Activated naive CD4-positive, alpha-beta T cell treated with anti-CD3 and anti-CD28 coated beads for 36 hours (primary cell): ENCODE measurements at regions of chr6 and their contacts with region 1.

Region 1: DNA sequence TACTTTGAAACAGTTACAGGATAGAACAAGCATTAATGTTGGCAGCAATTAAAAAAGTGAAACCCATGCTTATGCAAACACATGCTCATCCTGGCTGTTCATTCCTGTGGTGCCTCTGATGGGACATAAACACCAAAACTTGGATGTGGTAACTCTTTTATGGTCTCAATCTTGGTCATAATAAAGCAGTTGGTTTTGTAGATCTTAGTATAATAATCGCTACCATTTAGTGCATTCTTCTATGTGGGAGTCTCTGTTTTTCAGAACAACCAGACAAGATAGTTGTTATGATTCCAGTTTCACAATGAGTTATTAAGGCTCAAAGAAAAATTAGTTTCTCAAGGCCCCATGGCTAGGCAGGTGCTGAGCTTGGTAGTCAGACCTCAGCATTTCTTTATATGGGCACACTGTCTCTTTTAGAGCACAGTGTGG is 184.0 kb downstream of the UTRN start:
- DNase-seq: peak; percentile 43
- H3K4me3 Mint-ChIP-seq: peak overlapping the region; percentile 42
- H3K27ac Mint-ChIP-seq: peak overlapping the region; percentile 46
- H3K4me1 Mint-ChIP-seq: peaks cover 20% of the 10 kb centered on the region
- H3K27me3 Mint-ChIP-seq: no peaks in the 10 kb centered on the region

Region 2: DNA sequence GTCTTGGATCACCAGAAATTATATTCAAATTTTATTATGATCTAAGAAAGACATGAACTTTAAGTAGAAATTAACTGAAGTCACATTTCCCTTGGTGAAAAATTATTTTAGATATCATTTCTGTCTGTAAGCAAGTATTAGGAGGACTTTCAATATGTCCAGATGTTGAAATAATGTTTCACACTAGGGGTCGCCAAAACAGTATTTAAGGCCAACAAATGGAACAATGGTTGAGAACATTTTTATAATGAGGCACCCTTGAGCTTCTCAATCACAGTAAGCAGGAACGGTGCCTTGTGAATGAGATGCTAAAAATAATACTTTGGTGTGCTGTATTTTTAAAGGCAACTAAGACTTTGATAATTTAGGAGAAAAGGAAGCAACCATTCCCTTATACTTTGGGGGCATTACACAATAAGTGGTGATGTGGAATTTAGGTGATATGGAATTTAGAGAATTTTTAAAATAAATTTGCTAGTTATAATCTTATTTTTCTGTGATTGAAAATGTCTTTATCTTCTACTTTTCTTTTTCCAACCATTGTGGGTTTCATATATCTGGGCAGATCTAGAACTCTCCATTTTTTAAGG is 364.2 kb before region 1 on chr6:
- CTCF ChIA-PET with region 1: interaction called, 4 read pairs
- intact Hi-C with region 1: loop called (anchors 5 kb)
- DNase-seq: peak; percentile 48
- H3K4me3 Mint-ChIP-seq: no peak overlapping the region
- H3K27ac Mint-ChIP-seq: no peak overlapping the region
- H3K4me1 Mint-ChIP-seq: peaks cover 11% of the 10 kb centered on the region
- H3K27me3 Mint-ChIP-seq: no peaks in the 10 kb centered on the region

Region 3: GRCh38 chr6:144248476-144249301 is 220.5 kb before region 1 on chr6:
- CTCF ChIA-PET with region 1: no interaction called
- intact Hi-C with region 1: loop called (anchors 5 kb)
- DNase-seq: peak; percentile 9
- H3K4me3 Mint-ChIP-seq: no peak overlapping the region
- H3K27ac Mint-ChIP-seq: peak overlapping the region; percentile 32
- H3K4me1 Mint-ChIP-seq: peaks cover 16% of the 10 kb centered on the region
- H3K27me3 Mint-ChIP-seq: peaks cover 4% of the 10 kb centered on the region

Region 4: DNA sequence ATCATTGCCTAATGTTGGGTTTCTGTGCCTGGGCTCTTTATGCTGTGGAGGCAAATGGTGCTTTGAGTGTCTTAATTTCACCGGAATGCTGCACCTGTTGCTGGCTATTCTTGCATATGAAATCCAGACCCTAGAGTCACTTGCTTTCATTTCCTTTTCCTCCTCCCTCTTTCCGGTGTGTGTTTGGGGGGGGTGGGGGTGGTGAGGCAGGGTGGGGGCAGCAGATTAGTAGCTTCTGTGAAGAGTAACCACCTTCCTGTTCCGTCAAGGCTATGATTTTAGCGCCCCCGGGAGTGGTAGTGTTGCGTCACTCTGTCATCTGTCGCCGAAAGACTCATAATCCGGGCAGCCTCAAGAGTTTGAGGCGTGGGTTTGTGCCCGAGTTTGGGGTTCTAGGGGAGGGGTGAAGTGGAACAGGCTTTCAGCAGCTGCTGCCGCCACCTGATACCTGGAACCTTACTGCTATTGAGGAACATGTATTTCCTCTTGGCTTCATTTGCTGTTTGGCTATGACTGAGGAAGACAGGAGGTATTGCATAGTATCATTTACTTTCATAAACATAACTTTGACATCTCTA is 134.9 kb before region 1 on chr6:
- CTCF ChIA-PET with region 1: no interaction called
- intact Hi-C with region 1: loop called (anchors 1 kb)
- DNase-seq: peak; percentile 83
- H3K4me3 Mint-ChIP-seq: peak overlapping the region; percentile 59
- H3K27ac Mint-ChIP-seq: peak overlapping the region; percentile 50
- H3K4me1 Mint-ChIP-seq: peaks cover 45% of the 10 kb centered on the region
- H3K27me3 Mint-ChIP-seq: no peaks in the 10 kb centered on the region

Region 5: GRCh38 chr6:144423167-144423566 is 46.0 kb before region 1 on chr6:
- CTCF ChIA-PET with region 1: no interaction called
- intact Hi-C with region 1: no loop called
- DNase-seq: no peak
- H3K4me3 Mint-ChIP-seq: no peak overlapping the region
- H3K27ac Mint-ChIP-seq: no peak overlapping the region
- H3K4me1 Mint-ChIP-seq: peaks cover 13% of the 10 kb centered on the region
- H3K27me3 Mint-ChIP-seq: no peaks in the 10 kb centered on the region